MCF 10A (cell line): ENCODE measurements at regions of chr3 and their contacts with region 1.

Region 1: GRCh38 chr3:123584988-123585937 is at the start of gene HACD2:
- DNase-seq: peak; percentile 98
- H3K4me3 Mint-ChIP-seq: no peak within 1 kb of the TSS
- H3K27ac Mint-ChIP-seq: no peak within 1 kb of the TSS
- H3K4me1 Mint-ChIP-seq: peaks cover 30% of the 10 kb centered on the region
- H3K27me3 Mint-ChIP-seq: no peaks in the 10 kb centered on the region
- CTCF ChIP-seq: no peak
- total RNA-seq, gene HACD2: 76.5 and 97.7 TPM in 2 replicates

Region 2: DNA sequence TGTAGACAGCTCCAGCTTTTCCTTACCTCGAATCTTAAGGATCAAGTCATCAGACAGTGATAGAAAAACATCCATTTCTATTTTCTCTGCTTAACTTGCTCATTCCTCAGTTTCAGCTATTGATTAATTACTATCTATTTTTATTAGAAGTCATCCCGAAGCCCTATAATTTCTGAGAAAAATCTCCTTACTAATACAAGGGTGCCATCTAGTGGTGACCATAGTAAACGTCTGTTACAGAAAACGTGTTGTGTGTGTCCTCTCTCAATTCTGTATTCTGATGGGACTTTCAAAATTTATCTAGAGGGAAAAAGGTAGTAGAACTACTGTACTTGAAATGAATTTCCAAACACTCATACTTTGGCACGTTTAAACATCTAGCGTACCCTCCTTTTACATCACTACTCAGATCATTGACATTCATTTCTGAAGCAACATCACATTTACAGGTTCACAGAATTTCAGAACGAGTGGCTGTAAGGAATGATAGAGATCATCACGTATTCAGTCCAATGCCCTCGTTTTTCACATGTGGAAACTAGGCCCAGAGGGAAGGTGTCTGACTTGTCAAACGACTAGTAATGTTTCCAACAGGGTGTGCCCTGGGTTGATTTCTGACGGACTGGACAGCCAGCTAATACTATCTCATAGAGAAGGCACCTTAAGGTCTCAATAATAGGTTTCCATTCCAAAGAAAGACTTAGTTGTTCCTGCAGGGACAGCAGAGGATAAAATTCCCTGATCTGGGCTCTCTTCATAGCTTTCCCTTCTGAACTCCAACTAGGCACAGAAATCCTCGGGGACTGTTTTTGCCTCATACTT is 26.0 kb before region 1 on chr3:
- CTCF ChIA-PET with region 1: interaction called, 8 read pairs
- POLR2A ChIA-PET with region 1: interaction called, 17 read pairs
- intact Hi-C with region 1: no loop called
- DNase-seq: peak; percentile 57
- H3K4me3 Mint-ChIP-seq: no peak overlapping the region
- H3K27ac Mint-ChIP-seq: no peak overlapping the region
- H3K4me1 Mint-ChIP-seq: peaks cover 11% of the 10 kb centered on the region
- H3K27me3 Mint-ChIP-seq: no peaks in the 10 kb centered on the region
- CTCF ChIP-seq: peak; percentile 72

Region 3: DNA sequence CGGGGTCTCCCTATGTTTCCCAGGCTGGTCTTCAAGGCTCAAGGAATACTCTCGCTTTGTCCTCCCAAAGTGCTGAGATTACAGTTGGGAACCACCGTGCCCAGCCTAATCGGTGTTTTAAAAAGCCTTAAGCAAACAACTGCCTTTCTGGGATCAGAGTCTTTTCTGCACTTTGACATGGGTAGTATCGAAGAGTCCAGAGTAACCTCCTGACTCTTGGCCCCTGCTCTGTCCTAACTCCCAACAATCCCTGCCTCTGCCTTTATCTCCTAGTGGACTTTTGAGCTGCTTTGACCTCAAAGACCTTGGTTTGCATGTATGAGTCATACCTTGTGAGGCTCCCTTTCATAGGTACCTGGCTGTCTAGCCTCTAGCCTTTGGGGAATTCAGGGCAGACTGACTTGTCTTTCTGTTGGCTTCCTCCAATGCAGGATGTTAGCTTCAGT is 20.5 kb after region 1 on chr3:
- CTCF ChIA-PET with region 1: interaction called, 9 read pairs
- POLR2A ChIA-PET with region 1: interaction called, 381 read pairs
- intact Hi-C with region 1: loop called (anchors 1 kb)
- DNase-seq: peak; percentile 82
- H3K4me3 Mint-ChIP-seq: peak overlapping the region; percentile 47
- H3K27ac Mint-ChIP-seq: peak overlapping the region; percentile 96
- H3K4me1 Mint-ChIP-seq: peaks cover 31% of the 10 kb centered on the region
- H3K27me3 Mint-ChIP-seq: no peaks in the 10 kb centered on the region
- CTCF ChIP-seq: no peak

Region 4: GRCh38 chr3:123642182-123642956 is 57.1 kb after region 1 on chr3:
- CTCF ChIA-PET with region 1: interaction called, 5 read pairs
- POLR2A ChIA-PET with region 1: interaction called, 10 read pairs
- intact Hi-C with region 1: loop called (anchors 10 kb)
- DNase-seq: peak; percentile 89
- H3K4me3 Mint-ChIP-seq: no peak overlapping the region
- H3K27ac Mint-ChIP-seq: no peak overlapping the region
- H3K4me1 Mint-ChIP-seq: peaks cover 5% of the 10 kb centered on the region
- H3K27me3 Mint-ChIP-seq: no peaks in the 10 kb centered on the region
- CTCF ChIP-seq: no peak

Region 5: DNA sequence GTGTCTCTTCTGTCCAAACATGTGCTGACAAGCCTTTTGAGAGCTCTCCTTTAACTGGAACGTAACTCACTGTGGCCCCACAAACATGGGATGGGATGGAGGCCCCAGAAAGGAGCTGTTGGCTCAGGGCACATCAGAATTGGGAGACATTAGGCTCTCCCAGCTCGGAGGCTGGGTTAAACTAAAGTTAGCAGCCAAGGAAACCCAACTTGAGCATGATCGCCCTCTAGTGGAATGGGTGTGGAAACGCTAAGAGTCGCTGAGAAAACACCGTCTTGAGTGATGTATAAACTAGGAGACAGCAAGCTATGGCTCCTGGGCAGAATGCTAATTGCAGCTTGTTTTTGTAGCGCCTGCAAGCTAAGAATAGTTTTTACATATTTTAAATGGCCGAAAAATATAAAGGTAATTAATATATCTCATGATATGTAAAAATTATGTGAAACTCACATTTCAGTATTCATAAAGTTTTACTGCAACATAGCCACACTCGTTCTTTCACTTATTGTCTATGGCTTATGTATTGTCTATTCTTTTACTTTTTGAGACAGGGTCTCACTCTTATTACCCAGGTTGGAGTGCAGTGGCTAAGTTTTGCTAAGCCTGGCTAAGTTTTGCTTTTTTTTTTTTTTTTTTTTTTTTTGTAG is 138.4 kb after region 1 on chr3:
- CTCF ChIA-PET with region 1: interaction called, 3 read pairs
- POLR2A ChIA-PET with region 1: no interaction called
- intact Hi-C with region 1: loop called (anchors 5 kb)
- DNase-seq: peak; percentile 93
- H3K4me3 Mint-ChIP-seq: no peak overlapping the region
- H3K27ac Mint-ChIP-seq: no peak overlapping the region
- H3K4me1 Mint-ChIP-seq: peaks cover 7% of the 10 kb centered on the region
- H3K27me3 Mint-ChIP-seq: no peaks in the 10 kb centered on the region
- CTCF ChIP-seq: peak; percentile 64